ENCODE measurements at regions of chr14 and their contacts with region 1.

Region 1: DNA sequence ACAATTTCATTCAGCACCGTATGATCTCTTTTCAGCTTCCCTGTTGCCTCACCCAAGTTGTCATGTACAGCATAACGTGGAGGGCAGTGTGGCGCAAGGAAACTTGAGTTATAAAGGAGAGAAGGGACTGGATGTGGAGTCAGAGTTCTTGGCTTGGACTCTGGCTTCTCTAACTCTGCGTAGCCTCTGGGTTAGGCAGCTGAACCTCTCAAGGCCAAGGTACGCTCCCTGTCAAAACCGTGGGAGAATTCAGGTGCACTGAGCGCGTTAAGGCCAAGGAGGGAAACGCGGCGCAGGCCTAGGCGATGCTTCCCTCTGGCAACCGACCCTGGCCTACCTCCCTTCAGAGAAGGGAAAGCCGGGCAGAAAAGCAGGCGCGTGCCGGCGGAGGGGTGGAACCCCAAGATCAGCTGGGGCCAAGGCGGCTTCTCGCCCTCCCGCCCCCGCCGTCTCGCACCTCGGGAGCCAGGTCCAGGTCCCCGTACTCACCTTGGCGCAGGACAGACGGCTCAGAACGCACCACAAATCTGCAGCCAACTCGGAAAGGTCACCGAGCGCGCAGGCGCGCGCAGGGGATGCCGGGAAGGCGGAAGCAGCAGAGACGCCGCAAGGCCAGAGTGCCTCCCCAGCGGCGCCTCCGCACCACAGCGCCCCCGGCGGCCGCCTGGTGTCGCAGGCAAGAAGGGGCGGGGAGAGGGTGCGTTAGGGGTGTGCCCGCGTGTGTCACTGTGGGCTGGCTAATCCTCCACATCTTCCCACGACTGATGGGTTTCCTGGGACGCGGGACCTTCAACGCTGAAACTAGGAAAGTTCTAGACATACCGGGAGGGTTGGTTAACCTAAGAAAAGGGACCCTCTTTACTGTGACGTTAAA is 7.0 kb upstream of the TDRD9 start:
- DNase-seq: peak; percentile 88 to 97 (median 93)
- ATAC-seq: peak; percentile 98 to 100 (median 100)
- H3K4me3 ChIP-seq: peak overlapping the region; percentile 92 to 99
- H3K4me3 Mint-ChIP-seq: peak overlapping the region; percentile 83 to 88 (median 84)
- H3K27ac ChIP-seq: peak overlapping the region; percentile 59
- H3K27ac Mint-ChIP-seq: peak overlapping the region; percentile 59 to 79
- H3K4me1 ChIP-seq: peaks cover 6 to 32% of the 10 kb centered on the region in 2 experiments
- H3K4me1 Mint-ChIP-seq: peaks cover 6 to 32% (median 28%) of the 10 kb centered on the region in 3 donors
- H3K27me3 ChIP-seq: peaks cover 0 to 17% of the 10 kb centered on the region in 2 experiments
- H3K27me3 Mint-ChIP-seq: peaks cover 3 to 11% of the 10 kb centered on the region in 2 donors

Region 2: GRCh38 chr14:102063091-102063802 is 1858.0 kb before region 1 on chr14:
- CTCF ChIA-PET with region 1: interaction called in 1 of 2 experiments, 10 read pairs
- POLR2A ChIA-PET with region 1: no interaction called
- DNase-seq: peak; percentile 32 to 83 (median 56)
- ATAC-seq: peak; percentile 86 to 96 (median 89)
- H3K4me3 ChIP-seq: no peak overlapping the region
- H3K4me3 Mint-ChIP-seq: no peak overlapping the region
- H3K27ac ChIP-seq: no peak overlapping the region
- H3K27ac Mint-ChIP-seq: no peak overlapping the region
- H3K4me1 ChIP-seq: peaks cover 0 to 14% of the 10 kb centered on the region in 2 experiments
- H3K4me1 Mint-ChIP-seq: peaks cover under 1 to 12% (median 1%) of the 10 kb centered on the region in 3 donors
- H3K27me3 ChIP-seq: peaks cover 0 to 10% of the 10 kb centered on the region in 2 experiments
- H3K27me3 Mint-ChIP-seq: no peaks in the 10 kb centered on the region

Region 3: GRCh38 chr14:103910262-103910935 is 10.8 kb before region 1 on chr14:
- CTCF ChIA-PET with region 1: interaction called, 6 to 10 read pairs
- POLR2A ChIA-PET with region 1: no interaction called
- DNase-seq: peak; percentile 46 to 84 (median 61)
- ATAC-seq: peak; percentile 73 to 81 (median 78)
- H3K4me3 ChIP-seq: peak overlapping the region; percentile 14 to 52
- H3K4me3 Mint-ChIP-seq: peak overlapping the region; percentile 59 to 70 (median 64)
- H3K27ac ChIP-seq: no peak overlapping the region
- H3K27ac Mint-ChIP-seq: peak overlapping the region; percentile 83 to 84
- H3K4me1 ChIP-seq: peaks cover 7 to 22% of the 10 kb centered on the region in 2 experiments
- H3K4me1 Mint-ChIP-seq: peaks cover 25 to 28% (median 27%) of the 10 kb centered on the region in 3 donors
- H3K27me3 ChIP-seq: peaks cover 0 to 4% of the 10 kb centered on the region in 2 experiments
- H3K27me3 Mint-ChIP-seq: peaks cover 0 to 4% of the 10 kb centered on the region in 2 donors

Region 4: DNA sequence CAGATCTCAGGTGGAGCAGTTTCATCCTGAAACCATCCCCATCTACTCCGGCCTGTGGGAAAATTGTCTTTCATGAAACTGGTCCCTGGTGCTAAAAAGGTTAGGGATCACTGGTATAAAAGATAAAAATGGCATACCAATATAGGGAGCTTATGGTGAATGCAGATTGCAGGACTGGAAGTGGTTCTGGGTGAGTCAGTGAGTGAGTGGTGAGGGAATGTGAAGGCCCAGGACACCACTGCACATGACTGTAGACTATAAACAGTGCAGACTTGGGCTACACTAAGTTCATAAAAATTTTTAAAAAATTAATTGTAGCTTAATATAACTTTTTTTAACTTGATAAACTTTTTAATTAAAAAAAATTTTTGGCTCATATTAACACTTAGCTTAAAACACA is 88.1 kb after region 1 on chr14:
- CTCF ChIA-PET with region 1: no interaction called
- POLR2A ChIA-PET with region 1: interaction called in 1 of 2 experiments, 11 read pairs
- DNase-seq: no peak
- ATAC-seq: no peak
- H3K4me3 ChIP-seq: no peak overlapping the region
- H3K4me3 Mint-ChIP-seq: no peak overlapping the region
- H3K27ac ChIP-seq: no peak overlapping the region
- H3K27ac Mint-ChIP-seq: no peak overlapping the region
- H3K4me1 ChIP-seq: no peaks in the 10 kb centered on the region
- H3K4me1 Mint-ChIP-seq: no peaks in the 10 kb centered on the region
- H3K27me3 ChIP-seq: peaks cover 0 to 7% of the 10 kb centered on the region in 2 experiments
- H3K27me3 Mint-ChIP-seq: peaks cover 5 to 12% of the 10 kb centered on the region in 2 donors

Measured in T-cell (primary cell).